Adrenal gland (tissue), 19 donors: ENCODE measurements at regions of chr7 and their contacts with region 1.

Region 1: GRCh38 chr7:90455163-90456030 is 14.0 kb upstream of the PTTG1IP2 start:
- DNase-seq: peak in 2 of 7 donors; percentile 19 to 21
- H3K4me3 ChIP-seq: peak overlapping the region in 1 of 4 donors; percentile 31
- H3K27ac ChIP-seq: no peak overlapping the region
- H3K4me1 ChIP-seq: peaks cover 0 to 11% of the 10 kb centered on the region in 2 donors
- H3K27me3 ChIP-seq: no peaks in the 10 kb centered on the region
- CTCF ChIP-seq: peak; percentile 52 to 72 (median 68)
- POLR2A ChIP-seq: no peak

Region 2: DNA sequence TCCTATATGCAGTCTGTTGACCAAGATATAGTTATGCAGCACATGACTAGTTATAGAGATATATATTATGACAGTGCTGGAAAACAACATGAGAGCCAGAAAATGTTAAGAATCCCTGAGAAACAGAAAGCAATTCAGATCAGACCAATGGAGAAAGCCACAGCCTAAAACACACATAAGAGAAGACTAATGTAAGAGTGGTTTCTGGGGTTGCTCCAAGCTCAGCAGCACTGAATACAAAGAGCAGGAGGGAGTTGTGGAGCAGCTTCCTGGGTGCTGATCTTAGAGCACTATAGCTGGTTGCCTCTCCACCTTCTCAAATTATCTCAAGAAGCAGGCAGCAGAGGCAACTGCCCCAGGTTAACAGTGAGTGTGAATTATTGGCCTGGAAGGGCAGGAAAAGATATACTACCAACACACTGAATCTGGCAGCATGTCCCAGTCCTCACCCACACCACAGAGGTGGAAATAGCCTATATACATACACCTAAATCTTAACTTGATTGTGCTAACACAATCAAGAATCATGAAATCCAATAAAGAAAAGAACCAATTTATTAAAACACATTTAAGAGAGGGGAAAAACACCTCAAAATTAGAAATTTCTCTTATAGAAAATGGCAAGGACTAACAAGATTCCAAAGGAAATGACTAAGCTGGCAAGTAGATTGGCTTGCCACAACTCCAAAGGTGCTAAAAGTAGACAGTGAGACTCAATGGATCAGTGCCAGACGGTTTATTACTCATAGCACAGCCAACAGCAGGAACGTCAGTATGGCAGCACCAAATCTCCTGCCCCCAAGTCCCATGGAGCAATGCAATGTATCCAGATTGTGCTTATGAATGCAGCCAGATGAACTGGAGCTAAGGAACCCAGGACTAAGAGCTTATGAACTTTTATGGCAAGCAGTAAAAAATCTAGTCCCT is 19.1 kb after region 1 on chr7:
- intact Hi-C with region 1: loop called in 1 of 2 experiments (anchors 2 kb)
- DNase-seq: peak in 1 of 7 donors; percentile 8
- H3K4me3 ChIP-seq: no peak overlapping the region
- H3K27ac ChIP-seq: no peak overlapping the region
- H3K4me1 ChIP-seq: no peaks in the 10 kb centered on the region
- H3K27me3 ChIP-seq: no peaks in the 10 kb centered on the region
- CTCF ChIP-seq: no peak
- POLR2A ChIP-seq: no peak

Region 3: DNA sequence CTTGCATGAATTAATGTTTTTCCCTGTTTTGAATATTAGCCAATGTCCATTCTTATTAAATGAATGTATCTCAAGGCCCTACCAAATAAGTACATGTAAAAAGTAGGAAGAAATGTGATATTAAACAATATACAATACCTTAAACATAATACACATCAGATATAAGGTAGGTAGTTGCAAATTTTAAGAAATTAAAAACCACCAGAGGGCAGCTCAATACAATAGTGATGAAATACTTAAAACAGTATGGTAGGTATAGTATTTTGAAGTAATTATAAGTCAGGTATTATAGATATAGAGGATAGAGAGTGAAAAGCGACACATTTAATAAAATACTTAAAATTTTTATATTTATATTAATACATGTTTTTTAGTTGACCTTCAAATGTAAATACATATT is 97.1 kb after region 1 on chr7:
- intact Hi-C with region 1: no loop called
- DNase-seq: no peak
- H3K4me3 ChIP-seq: no peak overlapping the region
- H3K27ac ChIP-seq: no peak overlapping the region
- H3K4me1 ChIP-seq: no peaks in the 10 kb centered on the region
- H3K27me3 ChIP-seq: no peaks in the 10 kb centered on the region
- CTCF ChIP-seq: peak; percentile 5 to 52 (median 32)
- POLR2A ChIP-seq: no peak

Region 4: GRCh38 chr7:90629297-90629918 is 174.0 kb after region 1 on chr7:
- intact Hi-C with region 1: loop called in 1 of 2 experiments (anchors 10 kb)
- DNase-seq: peak in 3 of 7 donors; percentile 16 to 39 (median 17)
- H3K4me3 ChIP-seq: no peak overlapping the region
- H3K27ac ChIP-seq: no peak overlapping the region
- H3K4me1 ChIP-seq: peaks cover 7 to 9% of the 10 kb centered on the region in 2 donors
- H3K27me3 ChIP-seq: no peaks in the 10 kb centered on the region
- CTCF ChIP-seq: peak; percentile 40 to 78 (median 68)
- POLR2A ChIP-seq: no peak